PC-3 (cell line): ENCODE measurements at regions of chr10 and their contacts with region 1.

Region 1: DNA sequence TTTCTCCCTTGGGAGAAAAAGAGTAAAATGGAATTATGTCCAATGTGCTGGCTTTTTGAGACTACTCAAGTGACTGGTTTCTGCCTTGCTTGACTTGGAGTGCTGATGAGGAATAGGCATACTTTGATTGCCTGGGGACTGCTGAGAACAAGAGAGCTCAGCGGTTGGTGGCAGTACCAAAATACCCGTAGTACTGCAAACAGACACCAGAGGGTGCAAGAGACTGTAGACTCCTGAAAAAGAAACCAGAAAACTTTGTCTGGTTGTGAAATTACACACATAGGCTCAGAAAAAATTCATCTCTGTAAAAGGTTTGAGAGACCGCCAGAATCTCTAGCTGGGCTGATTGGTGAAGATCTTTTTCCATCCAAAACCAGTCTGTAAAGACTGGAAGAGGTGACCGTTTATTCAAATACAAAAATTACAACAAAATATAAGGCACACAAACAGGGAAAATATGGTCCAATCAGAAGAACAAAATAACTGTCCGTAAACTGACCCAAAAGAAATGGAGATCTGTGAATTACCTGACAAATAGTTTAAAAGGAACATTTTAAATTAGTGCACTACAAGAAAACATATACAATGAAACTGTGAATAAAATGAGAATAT is 18.5 kb downstream of the BICC1 start:
- DNase-seq: peak; percentile 97
- ATAC-seq: peak; percentile 97
- H3K4me3 ChIP-seq: no peak overlapping the region
- H3K27ac ChIP-seq: no peak overlapping the region
- H3K4me1 ChIP-seq: no peaks in the 10 kb centered on the region
- H3K27me3 ChIP-seq: peaks cover 4% of the 10 kb centered on the region; the same call in 1 of the 2 replicates
- CTCF ChIP-seq: peak; percentile 93

Region 2: GRCh38 chr10:57723305-57723704 is 807.9 kb before region 1 on chr10:
- CTCF ChIA-PET with region 1: no interaction called
- POLR2A ChIA-PET with region 1: no interaction called
- intact Hi-C with region 1: no loop called
- DNase-seq: no peak
- ATAC-seq: no peak
- H3K4me3 ChIP-seq: no peak overlapping the region
- H3K27ac ChIP-seq: no peak overlapping the region
- H3K4me1 ChIP-seq: no peaks in the 10 kb centered on the region
- H3K27me3 ChIP-seq: peaks cover 3% of the 10 kb centered on the region; the same call in 1 of the 2 replicates
- CTCF ChIP-seq: no peak

Region 3: DNA sequence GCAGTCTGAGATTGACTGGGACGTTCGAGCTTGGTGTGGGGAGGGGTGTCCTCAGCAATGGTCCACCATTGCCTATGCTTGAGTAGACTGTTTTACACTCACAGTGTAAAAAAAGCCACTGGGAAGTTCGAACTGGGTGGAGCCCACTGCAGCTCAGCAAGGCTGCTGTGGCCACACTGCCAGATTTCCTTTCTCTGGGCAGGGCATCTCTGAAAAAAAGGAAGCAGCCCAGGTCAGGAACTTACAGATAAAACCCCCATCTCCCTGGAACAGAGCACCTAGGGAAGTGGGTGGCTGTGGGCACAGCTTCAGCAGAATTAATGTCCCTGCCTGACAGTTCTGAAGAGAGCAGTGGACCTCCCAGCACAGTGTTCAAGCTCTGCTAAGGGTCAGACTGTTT is 61.8 kb after region 1 on chr10:
- CTCF ChIA-PET with region 1: no interaction called
- POLR2A ChIA-PET with region 1: no interaction called
- intact Hi-C with region 1: no loop called
- DNase-seq: no peak
- ATAC-seq: no peak
- H3K4me3 ChIP-seq: no peak overlapping the region
- H3K27ac ChIP-seq: no peak overlapping the region
- H3K4me1 ChIP-seq: peaks cover 18% of the 10 kb centered on the region; the same call in 1 of the 2 replicates
- H3K27me3 ChIP-seq: no peaks in the 10 kb centered on the region
- CTCF ChIP-seq: no peak

Region 4: DNA sequence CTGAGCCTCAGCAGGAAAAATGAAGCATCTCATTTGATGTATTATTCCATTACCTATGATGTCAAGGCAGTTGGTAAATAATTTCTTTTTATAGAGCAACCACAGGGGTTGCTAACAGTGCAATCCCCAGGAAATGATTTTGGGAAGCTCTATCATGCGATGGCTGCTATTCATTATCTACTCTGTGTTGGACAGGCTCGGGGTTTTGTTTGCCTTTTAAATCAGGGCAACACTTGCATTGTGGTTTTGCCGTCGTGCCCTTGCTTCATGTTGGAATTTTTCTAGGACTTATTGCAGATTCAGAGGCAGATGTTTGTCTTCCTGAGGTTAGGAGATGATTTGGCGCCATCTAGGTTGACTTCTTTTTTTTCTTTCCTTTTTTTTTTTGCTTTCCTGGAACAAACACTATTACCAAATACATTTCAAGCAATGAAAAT is 109.9 kb after region 1 on chr10:
- CTCF ChIA-PET with region 1: interaction called, 26 read pairs
- POLR2A ChIA-PET with region 1: interaction called, 5 read pairs
- intact Hi-C with region 1: loop called (anchors 1 kb)
- DNase-seq: peak; percentile 78
- ATAC-seq: peak; percentile 89
- H3K4me3 ChIP-seq: peak overlapping the region; percentile 9; the same call in 1 of the 2 replicates
- H3K27ac ChIP-seq: peak overlapping the region; percentile 32
- H3K4me1 ChIP-seq: peaks cover 22% of the 10 kb centered on the region
- H3K27me3 ChIP-seq: peaks cover 16% of the 10 kb centered on the region
- CTCF ChIP-seq: peak; percentile 88

Region 5: GRCh38 chr10:59181668-59182067 is 650.5 kb after region 1 on chr10:
- CTCF ChIA-PET with region 1: interaction called, 3 read pairs
- POLR2A ChIA-PET with region 1: no interaction called
- intact Hi-C with region 1: loop called (anchors 2 kb)
- DNase-seq: peak; percentile 80
- ATAC-seq: peak; percentile 96
- H3K4me3 ChIP-seq: no peak overlapping the region
- H3K27ac ChIP-seq: no peak overlapping the region
- H3K4me1 ChIP-seq: no peaks in the 10 kb centered on the region
- H3K27me3 ChIP-seq: peaks cover 6% of the 10 kb centered on the region
- CTCF ChIP-seq: peak; percentile 89